Mucosa of descending colon (tissue), 3 donors: ENCODE measurements at regions of chr3 and their contacts with region 1.

Region 1: GRCh38 chr3:122305818-122306621 is 19.0 kb upstream of the CSTA start:
- DNase-seq: peak in 2 of 3 donors; percentile 67 to 72
- ATAC-seq: peak; percentile 83
- H3K4me3 ChIP-seq: no peak overlapping the region
- H3K4me1 ChIP-seq: peaks cover 31% of the 10 kb centered on the region
- CTCF ChIP-seq: no peak

Region 2: DNA sequence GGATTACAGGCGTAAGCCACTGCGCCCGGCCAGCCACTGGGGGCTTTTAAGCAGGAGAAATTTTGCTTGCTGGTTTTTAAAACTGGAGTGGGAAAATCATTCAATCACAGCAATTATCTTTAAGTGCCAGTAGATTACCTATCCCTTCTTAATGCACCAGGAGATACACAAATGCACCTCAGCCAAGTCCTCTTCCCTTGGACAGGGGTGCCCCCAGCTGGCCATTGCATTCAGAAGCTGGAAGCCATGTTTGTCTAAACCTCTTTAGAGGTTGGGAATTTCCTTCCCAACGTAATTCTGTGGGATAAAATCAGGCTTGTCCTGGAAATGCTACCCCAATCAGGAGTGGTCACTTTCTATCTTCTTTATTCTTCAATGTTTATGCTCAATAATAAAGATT is 50.4 kb after region 1 on chr3:
- intact Hi-C with region 1: loop called in 1 of 2 experiments (anchors 5 kb)
- DNase-seq: peak; percentile 58 to 82 (median 81)
- ATAC-seq: peak; percentile 82
- H3K4me3 ChIP-seq: no peak overlapping the region
- H3K4me1 ChIP-seq: peaks cover 2% of the 10 kb centered on the region
- CTCF ChIP-seq: peak; percentile 8

Region 3: GRCh38 chr3:122468896-122469533 is 163.0 kb after region 1 on chr3:
- intact Hi-C with region 1: no loop called
- DNase-seq: no peak
- ATAC-seq: no peak
- H3K4me3 ChIP-seq: no peak overlapping the region
- H3K4me1 ChIP-seq: no peaks in the 10 kb centered on the region
- CTCF ChIP-seq: no peak

Region 4: DNA sequence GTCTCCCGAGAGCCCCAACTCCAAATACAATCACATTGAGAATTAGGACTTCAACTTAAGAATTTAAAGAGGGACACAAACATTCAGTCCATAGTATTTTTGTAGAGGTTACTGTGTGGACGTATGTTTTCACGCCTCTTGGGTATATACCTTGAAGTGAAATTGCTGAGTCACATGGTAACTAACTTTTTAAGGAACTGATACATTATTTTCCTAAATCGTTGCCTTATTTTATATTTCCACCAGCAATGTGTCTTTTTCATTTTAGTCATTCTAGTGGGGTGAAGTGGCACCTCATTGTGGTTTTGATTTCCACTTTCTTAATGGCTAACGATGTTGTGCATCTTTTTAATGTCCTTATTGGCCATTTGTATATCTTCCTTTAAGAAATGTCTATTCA is 283.3 kb after region 1 on chr3:
- intact Hi-C with region 1: no loop called
- DNase-seq: no peak
- ATAC-seq: no peak
- H3K4me3 ChIP-seq: no peak overlapping the region
- H3K4me1 ChIP-seq: no peaks in the 10 kb centered on the region
- CTCF ChIP-seq: no peak